ENCODE measurements at regions of chr10 and their contacts with region 1.

Region 1: GRCh38 chr10:112375721-112376395 is 1.9 kb downstream of the ACSL5 start:
- DNase-seq: peak; percentile 61
- ATAC-seq: peak; percentile 90
- H3K4me3 Mint-ChIP-seq: peak overlapping the region; percentile 98
- H3K27ac Mint-ChIP-seq: peak overlapping the region; percentile 100
- H3K4me1 Mint-ChIP-seq: peaks cover 68% of the 10 kb centered on the region
- H3K27me3 Mint-ChIP-seq: no peaks in the 10 kb centered on the region

Region 2: DNA sequence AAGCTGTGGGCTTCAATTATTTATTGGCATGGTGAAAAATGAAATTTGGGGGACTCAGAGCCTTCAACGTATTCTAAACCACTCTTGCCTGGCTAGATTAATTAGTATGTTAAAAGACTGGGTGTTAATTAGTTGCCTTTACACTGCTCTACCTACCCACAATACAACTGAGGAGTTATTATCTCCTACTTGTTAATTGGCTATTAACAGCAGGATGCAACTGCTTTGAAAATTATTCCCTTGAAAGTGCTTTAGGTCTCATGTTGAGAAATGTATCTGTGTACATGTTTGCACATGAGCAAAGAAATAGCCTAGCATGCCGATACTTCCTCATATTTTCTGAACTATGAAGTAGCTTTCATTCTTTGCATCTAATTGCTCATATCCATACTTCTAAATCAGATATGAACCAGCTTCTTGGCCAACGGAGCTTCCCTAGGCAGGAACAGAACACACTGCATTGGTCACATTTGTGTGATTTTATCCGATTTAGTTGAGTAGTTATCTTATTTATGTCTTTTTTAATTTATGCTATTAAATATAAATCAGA is 348.1 kb before region 1 on chr10:
- CTCF ChIA-PET with region 1: no interaction called
- POLR2A ChIA-PET with region 1: no interaction called
- DNase-seq: no peak
- ATAC-seq: no peak
- H3K4me3 Mint-ChIP-seq: no peak overlapping the region
- H3K27ac Mint-ChIP-seq: no peak overlapping the region
- H3K4me1 Mint-ChIP-seq: no peaks in the 10 kb centered on the region
- H3K27me3 Mint-ChIP-seq: no peaks in the 10 kb centered on the region

Region 3: GRCh38 chr10:112363696-112364688 is 11.9 kb before region 1 on chr10:
- CTCF ChIA-PET with region 1: interaction called, 11 read pairs
- POLR2A ChIA-PET with region 1: interaction called, 3 read pairs
- DNase-seq: no peak
- ATAC-seq: no peak
- H3K4me3 Mint-ChIP-seq: no peak overlapping the region
- H3K27ac Mint-ChIP-seq: no peak overlapping the region
- H3K4me1 Mint-ChIP-seq: no peaks in the 10 kb centered on the region
- H3K27me3 Mint-ChIP-seq: peaks cover 2% of the 10 kb centered on the region

Region 4: GRCh38 chr10:112389147-112389822 is 13.4 kb after region 1 on chr10:
- CTCF ChIA-PET with region 1: interaction called, 15 read pairs
- POLR2A ChIA-PET with region 1: interaction called, 11 read pairs
- DNase-seq: peak; percentile 31
- ATAC-seq: peak; percentile 42
- H3K4me3 Mint-ChIP-seq: no peak overlapping the region
- H3K27ac Mint-ChIP-seq: peak overlapping the region; percentile 42
- H3K4me1 Mint-ChIP-seq: peaks cover 26% of the 10 kb centered on the region
- H3K27me3 Mint-ChIP-seq: no peaks in the 10 kb centered on the region

Region 5: GRCh38 chr10:112434988-112435619 is 59.2 kb after region 1 on chr10:
- CTCF ChIA-PET with region 1: interaction called, 22 read pairs
- POLR2A ChIA-PET with region 1: interaction called, 4 read pairs
- DNase-seq: no peak
- ATAC-seq: no peak
- H3K4me3 Mint-ChIP-seq: no peak overlapping the region
- H3K27ac Mint-ChIP-seq: no peak overlapping the region
- H3K4me1 Mint-ChIP-seq: no peaks in the 10 kb centered on the region
- H3K27me3 Mint-ChIP-seq: no peaks in the 10 kb centered on the region

Region 6: DNA sequence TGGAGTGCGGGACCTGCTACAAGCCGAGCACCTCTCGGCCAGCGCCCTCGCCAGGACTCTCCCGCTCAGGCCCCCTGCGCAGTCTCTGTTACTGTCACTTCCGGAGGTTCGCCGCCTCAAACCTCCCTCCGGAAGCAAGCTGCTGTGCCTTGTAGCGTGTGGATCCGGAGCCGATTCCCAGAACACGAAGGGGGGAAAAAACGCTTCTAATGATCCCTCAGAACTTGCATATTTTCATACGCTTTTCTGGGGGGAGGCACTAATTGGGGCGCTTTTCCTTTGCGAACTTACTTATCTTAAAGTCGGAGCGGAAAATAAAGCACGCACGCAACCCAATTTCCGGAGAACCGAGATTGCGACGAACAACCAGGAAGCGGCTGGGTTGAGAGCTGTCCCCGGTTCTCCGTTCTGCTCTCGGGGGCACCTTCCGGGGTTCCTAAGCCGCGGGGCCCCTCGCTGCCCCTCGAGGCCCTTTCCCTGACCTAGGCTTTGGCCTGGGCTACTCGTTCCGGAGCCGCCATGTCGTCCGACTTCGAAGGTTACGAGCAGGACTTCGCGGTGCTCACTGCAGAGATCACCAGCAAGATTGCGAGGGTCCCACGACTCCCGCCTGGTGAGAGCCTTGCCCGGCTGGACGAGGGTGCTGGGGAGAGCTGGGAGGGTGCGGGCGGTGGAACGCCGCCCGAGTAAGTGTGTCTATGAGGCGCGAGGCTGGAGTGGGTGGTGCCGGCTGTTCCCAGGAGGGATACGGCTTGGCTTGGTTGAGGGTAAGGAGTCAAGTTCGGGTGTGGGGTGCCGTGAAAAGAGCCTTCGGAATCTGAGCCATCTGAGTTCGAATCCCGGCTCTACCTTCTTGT is 71.2 kb after region 1 on chr10 and contains the starts of genes VTI1A and ZDHHC6:
- CTCF ChIA-PET with region 1: interaction called, 8 read pairs
- POLR2A ChIA-PET with region 1: interaction called, 37 read pairs
- DNase-seq: peak; percentile 89
- ATAC-seq: peak; percentile 94
- H3K4me3 Mint-ChIP-seq: peak within 1 kb of the TSS; percentile 89
- H3K27ac Mint-ChIP-seq: peak within 1 kb of the TSS; percentile 96
- H3K4me1 Mint-ChIP-seq: peaks cover 40% of the 10 kb centered on the region
- H3K27me3 Mint-ChIP-seq: no peaks in the 10 kb centered on the region
- total RNA-seq, gene VTI1A: 40.2 to 43.7 TPM
- total RNA-seq, gene ZDHHC6: 49.0 to 51.5 TPM

Measured in activated CD8-positive, alpha-beta T cell treated with anti-CD3 and anti-CD28 coated beads, Interleukin-2, amount 10 ng/mL, durations not matched to agents 7 days and 5 days (primary cell).